GM12878 (cell line): ENCODE measurements at regions of chr17 and their contacts with region 1.

Region 1: DNA sequence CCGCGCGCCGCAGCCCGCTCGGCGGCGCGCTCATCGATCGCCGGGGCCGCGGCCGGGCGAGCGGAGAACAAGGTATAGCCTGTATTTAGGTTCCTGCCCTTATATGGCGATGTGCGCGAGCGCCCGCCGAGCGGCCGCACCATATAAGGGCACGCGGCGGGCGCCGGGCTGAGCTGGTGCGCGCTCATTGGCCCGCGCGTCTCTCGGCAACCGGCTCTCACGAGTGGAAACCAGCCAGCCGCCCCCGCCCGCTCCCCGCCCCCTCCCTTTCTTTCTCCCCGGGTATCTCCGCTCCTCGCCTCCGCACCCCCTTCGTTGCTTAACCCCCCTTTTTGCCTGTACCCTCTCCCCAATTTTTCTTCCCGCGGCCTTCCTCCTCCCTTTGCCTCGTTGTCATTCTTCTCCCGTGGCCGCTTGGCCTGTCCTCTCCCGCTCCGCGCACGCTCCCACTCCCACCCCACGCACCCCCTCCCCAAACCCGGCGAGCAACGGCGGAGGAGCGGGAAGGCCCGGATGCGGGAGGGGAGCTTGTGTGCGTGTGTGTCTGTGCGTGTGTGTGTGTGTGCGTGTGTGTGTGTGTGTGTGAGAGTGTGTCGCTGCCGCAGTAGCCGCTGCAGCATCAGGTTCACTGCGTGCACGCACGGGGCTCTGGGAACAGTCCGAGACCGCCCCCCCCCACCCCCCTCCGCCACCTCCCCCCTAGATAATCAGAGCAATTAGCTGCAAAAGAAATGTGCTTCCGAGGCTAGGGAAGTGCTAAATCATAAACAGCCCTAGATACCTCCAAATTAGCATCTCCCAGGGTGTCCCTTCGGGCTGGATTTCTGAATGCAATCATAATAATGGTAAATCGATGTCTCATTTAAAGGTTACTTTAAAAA is 13.5 kb upstream of the CBX8 start:
- DNase-seq: no peak
- ATAC-seq: peak; percentile 95
- H3K4me3 ChIP-seq: peak overlapping the region; percentile 60; the same call in 1 of the 2 replicates
- H3K27ac ChIP-seq: no peak overlapping the region
- H3K4me1 ChIP-seq: peaks cover 36% of the 10 kb centered on the region
- H3K27me3 ChIP-seq: peaks cover 35 to 46% of the 10 kb centered on the region in 2 experiments
- CTCF ChIP-seq: no peak
- EP300 ChIP-seq: no peak
- POLR2A ChIP-seq: no peak
- RAD21 ChIP-seq: no peak

Region 2: GRCh38 chr17:79749156-79749815 is 61.1 kb before region 1 on chr17:
- CTCF ChIA-PET with region 1: interaction called, 13 read pairs
- POLR2A ChIA-PET with region 1: no interaction called
- RAD21 ChIA-PET with region 1: interaction called, 10 read pairs
- SMC1A ChIA-PET with region 1: no interaction called
- in situ Hi-C with region 1: no loop called
- intact Hi-C with region 1: no loop called
- DNase-seq: no peak
- ATAC-seq: no peak
- H3K4me3 ChIP-seq: no peak overlapping the region
- H3K27ac ChIP-seq: no peak overlapping the region
- H3K4me1 ChIP-seq: peaks cover 13% of the 10 kb centered on the region
- H3K27me3 ChIP-seq: peaks cover 0 to 4% of the 10 kb centered on the region in 2 experiments; a peak in 2 of 4 replicates
- CTCF ChIP-seq: no peak
- EP300 ChIP-seq: no peak
- POLR2A ChIP-seq: no peak
- RAD21 ChIP-seq: no peak

Region 3: DNA sequence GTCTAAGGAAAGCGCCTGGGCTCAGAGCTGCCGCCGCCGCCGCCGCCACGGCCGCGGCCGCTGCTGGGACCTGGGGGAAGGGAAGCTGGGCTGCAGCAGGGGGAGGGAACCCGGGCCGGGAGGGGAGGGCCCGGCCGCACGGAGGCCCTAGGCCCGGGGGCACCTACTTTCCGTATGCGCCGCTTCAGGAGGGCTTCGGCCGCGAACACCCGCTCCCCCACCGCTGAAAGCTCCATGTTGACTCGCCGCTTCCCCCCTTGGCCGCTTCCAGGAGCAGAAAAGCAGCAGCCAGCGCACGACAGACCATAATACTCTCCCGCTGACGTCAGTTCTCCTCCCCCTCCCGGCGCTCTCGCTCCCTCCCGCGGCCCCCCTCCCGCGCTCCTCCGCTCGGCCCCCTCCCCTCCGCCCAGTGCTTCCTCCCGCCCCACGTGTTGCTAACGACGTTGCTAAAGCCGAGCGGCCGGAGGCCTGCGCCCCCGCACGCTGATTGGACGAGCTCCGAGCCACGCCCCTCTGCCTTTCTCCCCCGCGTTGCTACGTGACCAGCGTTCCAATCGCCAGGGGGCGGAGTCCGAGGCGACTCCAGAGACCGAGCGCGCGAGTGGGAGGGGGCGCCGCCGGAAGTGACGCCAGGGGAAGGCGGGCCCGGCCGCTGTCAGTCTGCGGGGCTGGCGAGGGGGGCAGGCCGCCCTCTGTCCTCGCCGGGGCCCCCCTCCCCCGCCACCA is 13.4 kb before region 1 on chr17 and contains the start of gene CBX8:
- CTCF ChIA-PET with region 1: interaction called, 8 read pairs
- POLR2A ChIA-PET with region 1: interaction called, 11 read pairs
- RAD21 ChIA-PET with region 1: interaction called, 22 read pairs
- SMC1A ChIA-PET with region 1: interaction called, 12 read pairs
- in situ Hi-C with region 1: no loop called
- intact Hi-C with region 1: no loop called
- DNase-seq: peak; percentile 94
- ATAC-seq: peak; percentile 91
- H3K4me3 ChIP-seq: peak within 1 kb of the TSS; percentile 83
- H3K27ac ChIP-seq: peak within 1 kb of the TSS; percentile 64
- H3K4me1 ChIP-seq: peaks cover 29% of the 10 kb centered on the region
- H3K27me3 ChIP-seq: peaks cover 16 to 36% of the 10 kb centered on the region in 2 experiments
- CTCF ChIP-seq: peak in 1 of 3 experiments; percentile 11; a peak in 1 of 6 replicates
- EP300 ChIP-seq: no peak
- POLR2A ChIP-seq: peak; percentile 83
- RAD21 ChIP-seq: no peak
- polyA plus RNA-seq, gene CBX8: 0.03 to 0.16 TPM

Region 4: DNA sequence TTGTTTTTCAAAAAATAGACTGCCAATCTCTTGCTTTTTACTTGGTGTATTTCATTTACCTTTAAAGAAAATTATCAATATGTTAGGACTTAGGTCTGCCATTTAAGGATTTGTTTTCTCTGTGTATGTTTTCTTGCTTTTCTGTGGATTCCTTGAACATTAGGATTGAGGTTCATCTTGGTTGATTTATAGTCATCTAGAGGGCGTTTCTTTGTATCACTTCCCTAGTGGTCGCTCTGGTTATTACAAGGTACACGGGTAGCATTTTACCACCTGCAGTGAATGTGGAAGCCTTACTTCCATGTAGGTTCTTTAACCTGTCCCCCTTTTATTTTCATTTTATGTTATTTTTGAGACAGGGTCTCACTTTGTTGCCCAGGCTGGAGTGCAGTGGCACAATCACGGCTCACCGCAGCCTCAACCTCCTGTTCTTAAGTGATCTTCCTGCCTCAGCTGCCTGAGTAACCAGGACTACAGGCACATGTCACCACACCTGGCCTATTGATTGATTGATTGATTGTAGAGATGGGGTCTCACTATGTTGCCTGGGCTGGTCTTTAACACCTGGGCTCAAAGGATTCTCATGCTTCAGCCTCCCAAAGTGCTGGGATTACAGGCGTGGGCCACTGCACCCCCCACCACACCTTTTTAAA is 64.1 kb after region 1 on chr17:
- CTCF ChIA-PET with region 1: no interaction called
- POLR2A ChIA-PET with region 1: no interaction called
- RAD21 ChIA-PET with region 1: no interaction called
- SMC1A ChIA-PET with region 1: no interaction called
- in situ Hi-C with region 1: no loop called
- intact Hi-C with region 1: no loop called
- DNase-seq: no peak
- ATAC-seq: peak; percentile 86
- H3K4me3 ChIP-seq: no peak overlapping the region
- H3K27ac ChIP-seq: no peak overlapping the region
- H3K4me1 ChIP-seq: no peaks in the 10 kb centered on the region
- H3K27me3 ChIP-seq: no peaks in the 10 kb centered on the region
- CTCF ChIP-seq: peak; percentile 41 to 57 (median 55)
- EP300 ChIP-seq: no peak
- POLR2A ChIP-seq: no peak
- RAD21 ChIP-seq: peak; percentile 14; the same call in 1 of the 2 replicates

Region 5: GRCh38 chr17:79892459-79892858 is 82.1 kb after region 1 on chr17:
- CTCF ChIA-PET with region 1: no interaction called
- POLR2A ChIA-PET with region 1: no interaction called
- RAD21 ChIA-PET with region 1: no interaction called
- SMC1A ChIA-PET with region 1: no interaction called
- in situ Hi-C with region 1: no loop called
- intact Hi-C with region 1: no loop called
- DNase-seq: no peak
- ATAC-seq: no peak
- H3K4me3 ChIP-seq: no peak overlapping the region
- H3K27ac ChIP-seq: no peak overlapping the region
- H3K4me1 ChIP-seq: no peaks in the 10 kb centered on the region
- H3K27me3 ChIP-seq: peaks cover 1 to 4% of the 10 kb centered on the region in 2 experiments; a peak in 1 of 4 replicates
- CTCF ChIP-seq: no peak
- EP300 ChIP-seq: no peak
- POLR2A ChIP-seq: no peak
- RAD21 ChIP-seq: no peak